Right ventricle myocardium inferior (tissue), 1 donor: ENCODE measurements at regions of chr19 and their contacts with region 1.

Region 1: DNA sequence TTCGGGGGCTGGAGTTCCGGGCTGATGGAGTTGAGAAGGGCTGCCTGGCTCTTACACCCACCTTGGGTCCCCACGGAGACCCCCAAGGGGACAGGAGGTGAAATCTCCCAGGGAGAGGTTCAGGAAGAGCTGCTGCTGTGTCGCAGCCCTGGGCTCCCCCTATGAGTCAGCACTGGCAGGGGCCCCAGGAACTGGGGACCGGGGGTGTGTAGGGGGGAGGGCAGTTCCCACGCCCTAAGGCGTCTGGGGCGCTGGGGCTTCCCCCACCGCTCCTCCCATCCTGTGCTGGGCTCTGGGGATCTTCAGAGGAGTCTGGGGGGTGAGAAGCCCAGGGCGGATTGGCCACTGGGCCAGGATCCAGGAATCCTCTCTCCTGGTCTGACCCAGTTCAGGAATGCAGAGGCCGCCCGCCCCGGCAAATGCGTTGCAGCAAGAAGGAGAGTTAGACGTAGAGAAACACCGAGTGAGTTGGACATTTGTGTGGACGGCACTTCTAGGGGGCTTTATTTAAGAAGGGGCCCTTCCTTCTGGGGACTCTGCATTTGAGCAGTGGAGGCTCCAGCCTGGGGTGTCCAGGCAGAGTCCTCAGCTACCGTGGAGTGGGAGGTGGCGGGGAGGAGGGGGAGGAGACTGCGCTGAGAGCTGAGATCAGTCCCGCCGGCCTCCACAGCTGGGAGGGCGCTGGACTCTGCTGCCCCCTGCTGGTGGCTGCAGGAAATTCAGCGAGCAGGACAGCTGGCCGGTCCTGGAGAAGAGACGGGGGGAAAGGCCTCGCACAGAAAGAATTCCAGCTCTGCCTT is 15.0 kb upstream of the NANOS3 start:
- DNase-seq: peak; percentile 95
- ATAC-seq: peak; percentile 95

Region 2: GRCh38 chr19:13277104-13277809 is 584.7 kb before region 1 on chr19:
- intact Hi-C with region 1: loop called (anchors 10 kb)
- DNase-seq: no peak
- ATAC-seq: peak; percentile 89

Region 3: DNA sequence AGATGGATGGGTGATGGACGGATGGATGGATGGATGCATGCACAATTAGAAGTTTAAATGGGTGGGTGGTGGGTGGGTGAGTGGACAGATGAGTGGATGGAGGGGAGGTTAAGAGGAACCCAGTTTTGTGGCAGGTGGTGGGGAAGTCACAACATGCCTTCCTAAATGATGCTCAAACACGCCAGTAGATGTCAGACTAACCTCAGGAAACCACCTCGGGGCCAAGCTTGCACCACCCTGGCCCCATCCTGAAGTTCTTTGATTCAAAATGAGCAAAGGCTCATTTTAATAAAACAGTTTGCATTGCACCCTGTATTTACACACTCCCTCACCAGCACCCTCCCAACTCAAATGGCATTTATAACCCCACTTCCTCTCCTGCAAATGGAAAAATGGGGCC is 264.3 kb before region 1 on chr19:
- intact Hi-C with region 1: loop called (anchors 2 kb)
- DNase-seq: no peak
- ATAC-seq: peak; percentile 83

Region 4: DNA sequence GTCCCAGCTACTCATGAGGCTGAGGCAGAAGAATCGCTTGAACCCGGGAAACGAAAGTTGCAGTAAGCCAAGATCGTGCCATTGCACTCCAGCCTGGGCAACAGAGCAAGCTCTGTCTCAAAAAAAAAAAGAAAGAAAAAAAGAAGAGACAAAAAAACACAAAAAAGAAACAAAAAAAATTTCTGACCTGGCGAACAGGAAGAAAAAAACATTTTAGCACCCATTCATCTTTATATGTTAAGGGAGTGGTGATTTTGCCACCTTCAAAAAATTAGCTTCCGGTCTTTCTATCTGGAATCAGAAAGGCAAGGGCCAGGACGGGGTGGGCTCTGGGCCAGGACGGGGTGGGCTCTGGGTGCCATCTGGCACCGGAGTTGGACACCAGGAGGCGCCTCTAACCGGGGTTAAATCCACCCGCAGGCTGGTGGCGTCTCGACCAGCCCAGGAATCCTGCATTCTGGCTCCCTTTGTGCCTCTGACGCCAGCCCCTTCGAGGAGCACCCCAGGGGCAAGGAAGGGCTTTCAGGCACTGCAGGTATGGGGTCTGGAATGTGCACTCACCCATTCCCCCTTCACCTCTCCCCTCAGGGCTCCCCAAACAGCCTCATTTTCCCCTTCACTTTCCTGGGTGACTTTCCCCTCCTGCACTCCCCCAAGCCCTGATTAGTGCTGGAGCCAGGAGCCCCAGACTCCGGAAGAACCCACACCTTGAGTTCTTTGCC is 77.0 kb before region 1 on chr19:
- intact Hi-C with region 1: loop called (anchors 1 kb)
- DNase-seq: peak; percentile 89
- ATAC-seq: peak; percentile 77

Region 5: GRCh38 chr19:13804830-13805683 is 56.9 kb before region 1 on chr19:
- intact Hi-C with region 1: loop called (anchors 1 kb)
- DNase-seq: peak; percentile 74
- ATAC-seq: peak; percentile 76

Region 6: DNA sequence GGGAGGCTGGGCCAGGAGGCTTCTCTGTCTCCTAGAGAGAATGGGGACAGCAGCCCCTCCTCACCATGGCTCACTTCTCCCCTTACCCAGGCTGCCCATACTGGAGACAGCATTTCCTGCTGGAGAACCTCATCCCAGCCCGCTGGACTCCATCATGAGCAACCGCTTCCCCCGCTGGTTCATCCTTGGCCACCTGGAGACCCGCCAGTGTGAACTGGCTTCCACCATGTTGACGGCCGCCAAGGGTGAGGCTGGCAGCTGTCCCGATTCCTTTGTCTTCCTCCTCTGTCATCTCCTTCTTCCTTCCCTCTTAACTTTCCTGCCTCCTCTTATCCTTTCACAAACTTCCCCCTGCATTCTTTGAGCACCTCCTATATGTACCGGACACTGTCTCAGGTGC is 38.7 kb before region 1 on chr19:
- intact Hi-C with region 1: loop called (anchors 5 kb)
- DNase-seq: peak; percentile 82
- ATAC-seq: peak; percentile 12

Region 7: DNA sequence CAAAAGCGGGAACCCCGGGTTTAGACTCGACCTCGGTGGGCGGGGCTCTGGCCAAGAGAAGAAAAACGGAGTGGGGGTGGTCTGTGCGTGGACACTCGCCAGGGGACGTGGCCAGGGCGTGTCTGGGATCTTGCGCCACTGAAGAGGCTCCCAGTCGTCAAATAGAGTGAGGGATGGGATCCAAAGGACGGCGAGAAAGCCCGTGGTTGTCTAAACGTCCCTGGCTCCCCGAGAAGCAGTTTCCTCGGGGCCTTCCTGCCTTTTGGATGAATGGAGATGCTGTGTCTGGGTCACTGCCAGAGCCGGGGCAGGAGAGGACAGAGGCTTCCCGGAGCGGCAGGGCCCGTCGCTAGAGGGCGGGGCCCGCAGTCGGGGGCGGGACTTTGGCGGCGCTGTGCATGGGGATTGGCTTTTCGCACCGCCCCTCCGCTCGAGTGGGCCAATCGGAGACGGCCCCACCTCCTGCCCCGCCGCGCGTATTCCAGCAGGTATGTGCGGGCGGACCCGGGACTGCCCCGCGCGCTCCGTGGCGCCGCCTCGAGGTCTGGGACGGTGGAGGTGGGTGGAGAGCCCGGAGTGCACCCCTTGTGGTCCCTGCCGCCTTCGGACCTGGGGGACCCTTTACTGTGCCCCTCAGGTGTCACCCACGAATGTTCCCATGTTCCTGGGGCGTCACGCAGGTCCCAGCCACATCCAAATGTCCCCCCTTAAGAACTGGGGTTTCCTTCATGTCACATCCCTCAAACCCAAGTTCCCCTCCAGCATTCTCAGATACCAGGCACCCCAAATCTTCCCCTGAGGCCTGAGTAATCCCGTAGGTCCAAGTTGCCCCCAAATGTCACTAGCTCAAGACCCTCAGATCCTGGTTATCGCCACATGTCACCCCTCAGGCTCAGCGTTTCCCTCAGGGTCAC is 28.3 kb before region 1 on chr19:
- intact Hi-C with region 1: loop called (anchors 1 kb)
- DNase-seq: peak; percentile 96
- ATAC-seq: peak; percentile 85